Activated CD4-positive, alpha-beta T cell treated with anti-CD3 and anti-CD28 coated beads for 36 hours (primary cell): ENCODE measurements at regions of chr5 and their contacts with region 1.

Region 1: DNA sequence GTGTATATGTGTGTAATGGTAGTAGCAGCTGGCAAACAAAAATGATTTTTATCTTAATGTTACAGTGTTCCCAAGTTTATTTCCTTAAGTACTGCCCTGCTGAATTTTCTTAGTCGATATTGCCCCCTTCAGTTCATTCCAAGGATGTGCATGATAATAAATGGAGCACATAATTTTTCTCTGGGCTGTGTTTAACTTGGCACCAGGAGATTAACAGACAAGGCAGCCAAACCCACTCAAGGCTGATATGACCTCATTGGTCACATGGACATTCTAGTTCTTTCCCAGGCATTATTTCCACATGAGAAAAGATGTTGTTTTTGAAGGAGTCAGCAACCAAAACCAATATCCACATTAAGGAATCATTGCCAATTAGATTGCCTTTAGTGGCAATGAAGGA is 61.8 kb downstream of the COX7C start:
- DNase-seq: no peak
- ATAC-seq: no peak
- H3K4me3 Mint-ChIP-seq: no peak overlapping the region
- H3K27ac Mint-ChIP-seq: no peak overlapping the region
- H3K4me1 Mint-ChIP-seq: no peaks in the 10 kb centered on the region
- H3K27me3 Mint-ChIP-seq: peaks cover 7% of the 10 kb centered on the region

Region 2: GRCh38 chr5:86030753-86031152 is 648.8 kb before region 1 on chr5:
- CTCF ChIA-PET with region 1: no interaction called
- POLR2A ChIA-PET with region 1: no interaction called
- intact Hi-C with region 1: loop called in 1 of 2 experiments (anchors 10 kb)
- DNase-seq: no peak
- ATAC-seq: no peak
- H3K4me3 Mint-ChIP-seq: no peak overlapping the region
- H3K27ac Mint-ChIP-seq: no peak overlapping the region
- H3K4me1 Mint-ChIP-seq: no peaks in the 10 kb centered on the region
- H3K27me3 Mint-ChIP-seq: no peaks in the 10 kb centered on the region

Region 3: GRCh38 chr5:86175224-86175623 is 504.3 kb before region 1 on chr5:
- CTCF ChIA-PET with region 1: no interaction called
- POLR2A ChIA-PET with region 1: no interaction called
- intact Hi-C with region 1: no loop called
- DNase-seq: peak; percentile 6
- ATAC-seq: peak; percentile 71
- H3K4me3 Mint-ChIP-seq: no peak overlapping the region
- H3K27ac Mint-ChIP-seq: no peak overlapping the region
- H3K4me1 Mint-ChIP-seq: no peaks in the 10 kb centered on the region
- H3K27me3 Mint-ChIP-seq: no peaks in the 10 kb centered on the region